Natural killer cell (primary cell): ENCODE measurements at regions of chr1 and their contacts with region 1.

Region 1: GRCh38 chr1:107782217-107782845 is 182.6 kb downstream of the VAV3 start:
- DNase-seq: peak in 1 of 2 donors; percentile 86
- ATAC-seq: peak in 1 of 3 donors; percentile 45
- H3K4me3 ChIP-seq: no peak overlapping the region
- H3K4me3 Mint-ChIP-seq: no peak overlapping the region
- H3K27ac ChIP-seq: no peak overlapping the region
- H3K27ac Mint-ChIP-seq: peak overlapping the region; percentile 91 to 92
- H3K4me1 ChIP-seq: peaks cover 18% of the 10 kb centered on the region
- H3K4me1 Mint-ChIP-seq: peaks cover 50 to 55% of the 10 kb centered on the region in 2 donors
- H3K27me3 ChIP-seq: no peaks in the 10 kb centered on the region
- H3K27me3 Mint-ChIP-seq: no peaks in the 10 kb centered on the region
- CTCF ChIP-seq: peak; percentile 95

Region 2: GRCh38 chr1:107829061-107830040 is 47.0 kb after region 1 on chr1:
- intact Hi-C with region 1: loop called (anchors 1 kb)
- DNase-seq: peak in 1 of 2 donors; percentile 56
- ATAC-seq: peak; percentile 82 to 96 (median 92)
- H3K4me3 ChIP-seq: no peak overlapping the region
- H3K4me3 Mint-ChIP-seq: peak overlapping the region; percentile 88
- H3K27ac ChIP-seq: peak overlapping the region; percentile 65
- H3K27ac Mint-ChIP-seq: peak overlapping the region; percentile 87 to 90
- H3K4me1 ChIP-seq: peaks cover 37% of the 10 kb centered on the region
- H3K4me1 Mint-ChIP-seq: peaks cover 82 to 88% of the 10 kb centered on the region in 2 donors
- H3K27me3 ChIP-seq: no peaks in the 10 kb centered on the region
- H3K27me3 Mint-ChIP-seq: no peaks in the 10 kb centered on the region
- CTCF ChIP-seq: no peak

Region 3: DNA sequence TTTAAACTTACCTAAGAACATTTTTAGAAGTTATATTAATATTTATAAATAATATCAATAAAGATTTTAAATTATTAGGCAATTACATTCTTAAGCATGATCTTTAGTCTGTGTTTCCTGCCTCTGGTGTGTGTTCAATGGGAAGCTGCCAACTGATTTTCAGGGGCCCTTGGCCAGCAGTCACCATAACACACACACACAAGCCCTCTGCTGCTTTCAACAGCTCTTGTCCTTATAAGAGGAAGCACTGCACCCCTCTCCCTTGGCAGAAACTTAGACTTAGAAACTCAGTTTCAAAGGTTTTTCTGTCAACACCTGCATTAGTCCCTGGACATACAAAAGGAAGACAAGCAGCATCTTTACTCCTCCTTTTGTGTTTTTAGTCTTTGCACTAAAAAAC is 101.2 kb after region 1 on chr1:
- intact Hi-C with region 1: no loop called
- DNase-seq: no peak
- ATAC-seq: no peak
- H3K4me3 ChIP-seq: no peak overlapping the region
- H3K4me3 Mint-ChIP-seq: no peak overlapping the region
- H3K27ac ChIP-seq: no peak overlapping the region
- H3K27ac Mint-ChIP-seq: no peak overlapping the region
- H3K4me1 ChIP-seq: peaks cover 3% of the 10 kb centered on the region
- H3K4me1 Mint-ChIP-seq: peaks cover 54 to 71% of the 10 kb centered on the region in 2 donors
- H3K27me3 ChIP-seq: no peaks in the 10 kb centered on the region
- H3K27me3 Mint-ChIP-seq: no peaks in the 10 kb centered on the region
- CTCF ChIP-seq: no peak

Region 4: DNA sequence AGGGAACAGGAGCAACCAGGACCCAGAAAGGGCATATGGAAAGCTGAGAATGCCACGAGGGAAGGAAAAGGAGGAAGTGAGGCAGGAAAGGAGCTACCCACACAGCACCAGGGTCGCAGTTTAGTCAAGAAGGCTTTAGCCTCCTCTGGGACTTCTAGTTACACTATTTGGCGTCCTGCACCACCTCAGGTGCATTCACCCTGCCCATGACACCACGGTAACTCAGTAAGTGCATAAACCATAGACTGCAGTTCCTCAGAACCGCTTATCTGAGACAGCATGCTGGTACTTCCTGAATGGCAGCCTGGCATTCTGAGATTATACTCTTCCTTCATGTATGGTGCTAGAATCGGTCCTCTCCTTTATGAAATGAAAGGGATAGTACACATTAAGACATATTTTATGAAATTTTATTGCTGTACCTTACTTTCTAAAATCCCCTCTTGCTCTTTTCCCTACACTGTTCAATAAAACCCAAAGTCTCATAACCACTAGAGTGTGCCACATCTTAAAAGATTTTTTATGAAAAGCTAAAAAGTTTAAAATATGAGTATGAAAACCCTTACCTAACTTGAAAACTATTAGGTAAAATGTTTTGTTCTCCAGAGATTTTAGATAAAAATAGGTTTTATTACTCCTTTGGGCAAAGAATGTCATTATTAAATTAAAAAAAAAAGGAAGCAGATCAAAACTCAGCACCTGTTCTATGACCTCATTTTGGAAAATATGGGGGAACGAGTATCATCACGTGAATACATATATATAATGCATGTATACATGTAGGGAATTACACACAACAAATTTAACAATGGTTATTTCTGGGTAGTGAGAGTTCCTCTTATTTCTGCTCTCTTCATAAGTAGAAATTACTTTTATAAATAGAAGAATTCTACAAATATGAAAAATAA is 115.4 kb after region 1 on chr1:
- intact Hi-C with region 1: loop called (anchors 2 kb)
- DNase-seq: peak; percentile 21 to 45
- ATAC-seq: peak; percentile 67 to 70 (median 68)
- H3K4me3 ChIP-seq: no peak overlapping the region
- H3K4me3 Mint-ChIP-seq: peak overlapping the region; percentile 70
- H3K27ac ChIP-seq: peak overlapping the region; percentile 66
- H3K27ac Mint-ChIP-seq: peak overlapping the region; percentile 89 to 91
- H3K4me1 ChIP-seq: peaks cover 22% of the 10 kb centered on the region
- H3K4me1 Mint-ChIP-seq: peaks cover 77 to 85% of the 10 kb centered on the region in 2 donors
- H3K27me3 ChIP-seq: no peaks in the 10 kb centered on the region
- H3K27me3 Mint-ChIP-seq: no peaks in the 10 kb centered on the region
- CTCF ChIP-seq: no peak

Region 5: DNA sequence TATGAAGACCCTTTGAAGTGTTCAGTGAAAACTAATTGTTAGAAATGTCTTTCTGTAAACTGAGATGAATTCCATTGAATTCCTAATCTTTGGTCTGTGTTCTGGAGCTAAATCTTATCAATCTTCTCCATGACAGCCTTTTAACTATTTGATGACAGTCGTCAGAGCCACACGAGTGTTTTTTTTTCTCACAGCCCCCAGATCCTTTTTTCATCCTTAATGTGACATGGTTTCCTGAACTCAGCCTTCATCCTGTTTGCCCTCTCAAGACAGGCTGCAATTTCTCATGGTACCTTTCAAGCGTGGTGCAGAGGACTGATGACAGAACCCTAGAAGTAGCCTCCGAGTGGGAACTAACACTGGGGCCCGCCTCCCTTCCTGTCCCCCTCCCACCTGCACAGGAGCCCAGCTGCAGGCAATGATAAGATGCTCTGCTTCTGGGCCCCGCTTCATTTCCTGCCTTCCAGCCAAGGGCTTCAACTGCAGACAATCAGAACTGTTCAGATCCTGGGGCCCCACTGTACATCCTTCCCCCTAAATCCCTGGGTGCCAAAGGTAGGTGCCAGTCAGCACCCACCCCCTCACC is 297.2 kb after region 1 on chr1:
- intact Hi-C with region 1: loop called (anchors 2 kb)
- DNase-seq: peak; percentile 21 to 67
- ATAC-seq: peak; percentile 39 to 47 (median 43)
- H3K4me3 ChIP-seq: no peak overlapping the region
- H3K4me3 Mint-ChIP-seq: peak overlapping the region; percentile 61
- H3K27ac ChIP-seq: peak overlapping the region; percentile 74
- H3K27ac Mint-ChIP-seq: peak overlapping the region; percentile 61 to 82
- H3K4me1 ChIP-seq: peaks cover 45% of the 10 kb centered on the region
- H3K4me1 Mint-ChIP-seq: peaks cover 62 to 63% of the 10 kb centered on the region in 2 donors
- H3K27me3 ChIP-seq: no peaks in the 10 kb centered on the region
- H3K27me3 Mint-ChIP-seq: no peaks in the 10 kb centered on the region
- CTCF ChIP-seq: no peak

Region 6: GRCh38 chr1:108199781-108200570 is 417.6 kb after region 1 on chr1 and contains the start of gene SLC25A24:
- intact Hi-C with region 1: loop called (anchors 5 kb)
- DNase-seq: peak; percentile 53 to 81
- ATAC-seq: peak; percentile 89 to 97 (median 91)
- H3K4me3 ChIP-seq: peak within 1 kb of the TSS; percentile 97
- H3K4me3 Mint-ChIP-seq: peak within 1 kb of the TSS; percentile 92
- H3K27ac ChIP-seq: peak within 1 kb of the TSS; percentile 80
- H3K27ac Mint-ChIP-seq: peak within 1 kb of the TSS; percentile 75 to 89
- H3K4me1 ChIP-seq: peaks cover 15% of the 10 kb centered on the region
- H3K4me1 Mint-ChIP-seq: peaks cover 34 to 37% of the 10 kb centered on the region in 2 donors
- H3K27me3 ChIP-seq: no peaks in the 10 kb centered on the region
- H3K27me3 Mint-ChIP-seq: peaks cover 0 to 14% of the 10 kb centered on the region in 2 donors
- CTCF ChIP-seq: no peak
- total RNA-seq, gene SLC25A24: 7.6 to 11.5 (median 11.3) TPM